Dendritic cell treated with granulocyte-macrophage colony-stimulating factor and Interleukin-4, amounts not matched to agents 40 ng/mL and 50 ng/mL, for 4 days (primary cell): ENCODE measurements at regions of chr1 and their contacts with region 1.

Region 1: DNA sequence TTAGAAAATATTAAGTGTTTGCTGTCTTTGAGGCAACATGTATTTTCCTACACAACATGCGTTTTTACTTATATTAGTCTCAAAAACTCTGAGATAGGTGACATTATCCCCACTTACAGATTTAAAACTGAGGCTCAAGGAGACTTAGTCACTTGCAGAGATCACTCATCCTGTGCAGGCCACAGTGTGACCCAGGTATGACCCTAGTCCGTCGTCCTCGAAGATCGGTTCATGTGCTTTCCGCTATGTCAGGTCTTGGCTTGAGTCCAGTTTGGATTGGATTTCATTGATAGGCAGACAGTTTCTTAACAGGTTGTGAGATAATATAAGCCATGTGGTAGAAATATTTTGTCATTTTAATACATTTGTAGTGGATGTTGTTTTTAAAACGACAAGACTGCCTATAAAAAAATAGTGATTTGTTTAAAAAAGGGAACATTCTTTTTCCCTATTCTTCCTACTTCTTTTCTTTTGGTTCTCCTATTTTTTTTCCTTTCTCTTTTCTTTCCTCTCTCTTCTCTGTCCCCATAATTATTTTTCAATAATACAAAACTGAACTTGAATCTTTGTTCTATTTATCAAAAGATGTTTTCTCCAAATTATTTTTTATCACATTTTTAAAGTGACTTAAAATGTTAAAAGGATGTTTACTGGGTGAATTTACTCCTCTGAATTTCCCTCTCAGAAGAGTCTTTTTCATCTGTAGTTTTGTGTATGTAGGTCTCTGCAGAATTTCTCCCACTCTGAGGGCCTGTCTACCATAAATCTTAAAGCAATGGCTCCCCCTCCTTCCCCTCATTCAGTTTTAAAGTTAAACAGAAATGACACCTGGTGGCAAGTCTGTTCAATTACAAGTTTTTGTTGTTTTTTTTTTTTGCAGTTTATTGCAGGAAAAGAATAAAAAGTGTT is 81.8 kb downstream of the PHTF1 start:
- H3K4me3 Mint-ChIP-seq: no peak overlapping the region
- H3K27ac Mint-ChIP-seq: no peak overlapping the region
- H3K4me1 Mint-ChIP-seq: peaks cover 23% of the 10 kb centered on the region
- H3K27me3 Mint-ChIP-seq: peaks cover 5% of the 10 kb centered on the region

Region 2: GRCh38 chr1:113140588-113141446 is 536.7 kb before region 1 on chr1:
- intact Hi-C with region 1: loop called (anchors 2 kb)
- H3K4me3 Mint-ChIP-seq: peak overlapping the region; percentile 21
- H3K27ac Mint-ChIP-seq: peak overlapping the region; percentile 77
- H3K4me1 Mint-ChIP-seq: peaks cover 29% of the 10 kb centered on the region
- H3K27me3 Mint-ChIP-seq: no peaks in the 10 kb centered on the region

Region 3: DNA sequence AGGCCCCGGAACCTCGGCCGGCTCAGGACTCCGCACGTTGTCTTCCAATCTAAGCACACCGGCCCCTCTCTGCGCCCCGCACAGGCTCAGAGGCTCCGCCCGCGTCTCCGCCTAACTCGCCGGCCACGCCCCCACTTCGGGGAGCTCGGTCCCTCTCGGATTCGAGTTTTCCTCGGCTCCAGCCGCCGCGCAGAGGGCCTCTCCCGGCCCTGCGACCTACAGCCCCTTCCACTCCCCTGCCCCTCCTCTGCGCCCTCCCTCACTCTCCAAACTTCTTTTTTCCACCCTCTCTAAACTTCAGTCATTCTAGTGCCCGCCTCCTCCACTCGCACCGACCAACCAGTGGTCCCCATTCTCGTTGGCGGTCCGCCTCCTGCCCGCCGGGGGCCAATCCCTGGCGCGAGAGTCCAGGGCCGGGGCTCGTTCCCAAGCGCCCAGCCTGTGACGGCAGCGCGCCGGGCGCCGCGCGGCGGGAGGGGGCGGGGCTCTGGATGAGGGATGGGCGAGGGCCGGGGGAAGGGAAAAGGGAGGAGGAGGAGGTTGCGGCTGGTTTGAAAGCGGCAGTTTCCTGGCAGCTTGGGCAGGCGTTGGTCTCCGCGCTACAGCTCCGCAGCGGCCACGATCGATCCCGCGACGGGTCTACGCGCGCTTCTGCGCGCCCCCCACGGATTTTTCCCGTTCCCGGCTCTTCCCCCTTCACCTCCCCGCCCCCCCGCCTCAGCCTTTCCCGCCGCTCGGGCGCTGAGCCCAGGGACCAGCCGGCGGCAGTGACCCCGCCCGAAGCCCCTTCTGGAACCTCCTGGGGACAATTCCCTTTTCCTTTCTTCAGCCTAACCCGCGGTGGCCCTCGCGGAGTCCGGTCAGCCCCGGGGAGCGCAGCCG is 287.3 kb before region 1 on chr1 and contains the start of gene MAGI3:
- intact Hi-C with region 1: loop called (anchors 5 kb)
- H3K4me3 Mint-ChIP-seq: peak within 1 kb of the TSS; percentile 94
- H3K27ac Mint-ChIP-seq: peak within 1 kb of the TSS; percentile 85
- H3K4me1 Mint-ChIP-seq: peaks cover 24% of the 10 kb centered on the region
- H3K27me3 Mint-ChIP-seq: peaks cover 52% of the 10 kb centered on the region

Region 4: DNA sequence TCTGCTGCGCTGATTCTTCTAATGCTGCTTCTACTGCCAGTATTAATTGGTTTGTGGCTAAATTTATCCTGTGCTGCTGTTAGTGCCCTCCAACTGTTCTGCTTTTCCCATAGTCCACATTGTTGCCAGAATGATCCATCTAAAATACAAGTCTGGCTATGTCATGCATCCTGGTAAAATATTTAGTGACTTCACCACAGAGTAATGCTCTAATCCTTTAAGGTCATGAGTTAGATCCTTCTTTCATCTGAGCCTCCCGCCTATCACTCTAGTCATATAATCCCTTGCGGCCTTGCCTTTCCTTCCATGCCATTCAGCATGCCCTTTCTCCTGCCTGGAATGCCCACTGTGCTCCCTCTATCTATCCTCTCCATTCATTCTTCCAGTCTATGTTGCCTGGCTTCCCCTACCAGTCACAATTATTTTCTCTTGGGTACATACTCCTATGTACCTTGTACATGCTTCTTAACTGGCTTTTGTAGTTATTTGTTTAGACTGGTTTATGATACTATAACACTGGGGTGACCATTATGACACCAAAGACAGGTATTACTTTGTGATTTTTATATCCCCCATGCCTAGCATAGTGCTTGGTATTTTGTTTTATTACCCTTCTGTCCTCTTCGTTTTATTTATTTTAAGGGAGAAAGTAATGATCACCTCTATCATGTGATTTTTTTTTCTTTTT is 143.2 kb before region 1 on chr1:
- intact Hi-C with region 1: no loop called
- H3K4me3 Mint-ChIP-seq: no peak overlapping the region
- H3K27ac Mint-ChIP-seq: no peak overlapping the region
- H3K4me1 Mint-ChIP-seq: no peaks in the 10 kb centered on the region
- H3K27me3 Mint-ChIP-seq: peaks cover 1% of the 10 kb centered on the region